ENCODE measurements at regions of chr10 and their contacts with region 1.

Region 1: DNA sequence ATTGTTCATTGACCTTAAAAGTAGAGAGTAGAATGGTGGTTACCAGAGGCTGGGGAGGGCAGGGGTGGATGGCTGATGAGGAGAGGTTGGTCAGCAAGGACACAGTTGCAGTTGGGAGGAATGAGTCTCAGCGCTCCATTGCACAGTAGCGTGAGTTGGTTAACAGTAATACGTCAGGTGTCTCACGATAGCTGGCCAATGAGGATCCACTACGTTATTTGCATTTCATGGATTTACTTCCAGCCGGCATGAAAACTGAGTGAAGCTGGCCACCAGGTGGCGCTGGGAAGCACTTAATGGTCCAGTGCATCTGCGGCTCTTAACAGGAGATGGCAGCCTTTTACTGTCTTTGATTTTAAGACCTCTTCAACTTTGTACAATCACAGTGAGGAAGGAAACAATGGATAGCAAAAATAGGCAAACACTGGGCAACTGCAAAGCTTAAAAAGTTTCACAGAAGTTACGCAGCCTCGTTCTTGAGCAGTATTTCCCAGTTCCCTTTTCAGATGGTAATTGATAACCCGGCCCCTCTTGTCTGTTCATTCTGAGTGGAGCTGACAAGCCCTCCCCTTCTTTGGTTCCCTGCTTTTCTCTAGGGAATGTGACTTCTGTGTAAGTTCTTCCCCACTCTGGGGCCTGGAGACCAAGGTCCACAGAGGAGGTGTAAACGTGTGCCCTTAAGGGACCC is 23.7 kb downstream of the AKR1E2 start:
- DNase-seq: peak; percentile 98

Region 2: DNA sequence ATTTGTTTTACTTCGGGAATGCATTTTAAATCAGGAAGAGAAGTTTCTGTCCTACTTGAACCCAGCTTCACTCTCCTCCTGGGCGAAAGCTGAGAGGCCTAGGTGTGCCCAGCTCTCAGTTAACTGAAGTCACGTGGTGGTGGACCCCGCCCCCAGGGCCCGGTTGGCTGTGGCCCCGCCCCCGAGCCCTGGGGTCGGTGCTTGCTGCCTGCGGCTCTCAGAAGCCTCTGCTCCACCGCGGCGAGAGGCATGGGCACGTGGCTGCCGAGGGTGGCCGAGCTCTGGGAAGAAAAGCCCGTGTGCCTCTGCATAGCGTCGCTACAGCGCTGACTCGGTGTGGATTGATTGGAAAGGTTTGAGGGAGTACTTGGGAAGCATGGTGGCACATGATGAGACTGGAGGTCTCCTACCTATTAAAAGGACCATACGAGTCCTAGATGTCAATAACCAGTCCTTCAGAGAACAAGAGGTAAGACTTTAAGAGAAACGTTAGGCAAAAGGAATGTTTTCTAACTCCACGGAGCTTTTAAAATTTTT is 596.8 kb after region 1 on chr10:
- in situ Hi-C with region 1: loop called (anchors 25 kb)
- DNase-seq: peak; percentile 91